ENCODE measurements at regions of chr16 and their contacts with region 1.

Region 1: DNA sequence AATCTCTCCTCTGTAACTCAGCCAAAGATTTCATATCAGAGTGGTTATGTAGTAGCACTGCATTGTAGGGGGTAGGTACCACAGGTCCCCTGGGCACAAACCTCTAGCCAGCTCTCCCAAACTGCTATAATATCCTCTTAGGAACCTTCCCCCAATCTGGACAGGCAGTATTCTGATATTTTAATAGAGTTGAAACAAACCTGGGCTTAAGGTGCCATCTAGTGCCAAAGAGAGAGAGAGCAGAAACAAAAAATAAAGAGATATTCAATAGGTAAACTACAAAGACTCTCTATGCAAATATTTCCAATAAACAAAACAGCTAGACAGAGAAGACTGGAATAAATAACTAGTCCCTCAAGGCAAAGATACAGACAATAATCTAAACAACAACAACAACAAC is 1070.0 kb downstream of the CDH11 start:
- DNase-seq: peak; percentile 32
- ATAC-seq: peak; percentile 61
- H3K4me3 ChIP-seq: no peak overlapping the region
- H3K27ac ChIP-seq: no peak overlapping the region
- H3K4me1 ChIP-seq: peaks cover 6% of the 10 kb centered on the region
- H3K27me3 ChIP-seq: no peaks in the 10 kb centered on the region
- CTCF ChIP-seq: peak; percentile 56
- EP300 ChIP-seq: no peak
- POLR2A ChIP-seq: no peak
- RAD21 ChIP-seq: 0 out of 2 replicates have a peak, but pooled peaks have one; percentile 36

Region 2: GRCh38 chr16:62190426-62190825 is 1861.4 kb before region 1 on chr16:
- CTCF ChIA-PET with region 1: no interaction called
- POLR2A ChIA-PET with region 1: no interaction called
- in situ Hi-C with region 1: no loop called
- intact Hi-C with region 1: loop called (anchors 2 kb)
- DNase-seq: peak; percentile 24
- ATAC-seq: peak; percentile 85
- H3K4me3 ChIP-seq: no peak overlapping the region
- H3K27ac ChIP-seq: no peak overlapping the region
- H3K4me1 ChIP-seq: no peaks in the 10 kb centered on the region
- H3K27me3 ChIP-seq: no peaks in the 10 kb centered on the region
- CTCF ChIP-seq: peak; percentile 41; the same call in 1 of the 2 replicates
- EP300 ChIP-seq: no peak
- POLR2A ChIP-seq: no peak
- RAD21 ChIP-seq: no peak

Region 3: DNA sequence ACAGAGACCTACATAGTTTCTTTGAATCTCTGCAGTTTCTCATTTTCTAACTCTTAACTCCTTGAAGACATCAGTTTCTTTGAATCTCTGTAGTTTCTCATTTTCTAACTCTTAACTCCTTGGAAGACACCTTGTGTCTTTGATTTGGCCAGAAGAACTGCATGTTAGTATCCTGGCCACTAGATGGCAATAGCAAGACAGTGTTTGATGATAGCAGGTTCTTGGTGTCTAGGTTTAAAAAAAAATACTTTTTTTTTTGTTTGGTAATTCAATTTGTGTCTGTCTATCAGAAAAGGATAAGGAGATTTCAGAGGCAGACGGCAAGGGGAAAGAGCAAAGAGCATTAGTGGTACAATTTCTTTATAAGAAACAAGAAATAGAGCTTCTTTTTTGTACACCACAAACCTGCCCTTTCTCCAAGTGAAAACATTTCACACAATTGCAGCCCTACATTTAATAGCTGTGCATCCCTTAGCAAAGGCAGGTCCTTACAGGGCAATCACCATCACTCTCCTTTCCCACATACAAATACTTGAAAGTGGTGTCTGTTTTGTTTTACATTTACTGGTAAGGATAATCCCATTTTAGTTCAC is 690.7 kb before region 1 on chr16:
- CTCF ChIA-PET with region 1: interaction called, 6 read pairs
- POLR2A ChIA-PET with region 1: no interaction called
- in situ Hi-C with region 1: loop called (anchors 10 kb)
- intact Hi-C with region 1: loop called (anchors 1 kb)
- DNase-seq: peak; percentile 46
- ATAC-seq: peak; percentile 62
- H3K4me3 ChIP-seq: no peak overlapping the region
- H3K27ac ChIP-seq: no peak overlapping the region
- H3K4me1 ChIP-seq: no peaks in the 10 kb centered on the region
- H3K27me3 ChIP-seq: no peaks in the 10 kb centered on the region
- CTCF ChIP-seq: peak; percentile 76
- EP300 ChIP-seq: no peak
- POLR2A ChIP-seq: no peak
- RAD21 ChIP-seq: 0 out of 2 replicates have a peak, but pooled peaks have one; percentile 15

Region 4: DNA sequence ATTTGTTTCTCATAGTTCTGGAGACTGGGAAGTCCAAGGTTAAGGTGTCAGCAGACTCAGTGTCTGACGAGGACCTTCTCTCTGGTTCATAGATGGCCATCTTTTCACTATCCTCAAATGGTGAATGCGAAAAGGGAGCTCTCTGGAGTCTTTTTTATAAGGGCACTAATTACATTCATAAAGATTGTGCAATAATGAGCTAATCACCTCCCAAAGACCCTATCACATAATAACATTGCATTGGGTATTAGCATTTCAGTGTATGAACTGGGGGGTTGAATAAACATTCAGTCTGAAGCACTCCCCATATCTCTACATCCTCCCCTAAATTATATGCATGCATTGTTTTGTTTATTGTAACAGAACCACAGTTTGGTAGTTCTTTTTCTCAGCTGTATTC is 16.5 kb before region 1 on chr16:
- CTCF ChIA-PET with region 1: no interaction called
- POLR2A ChIA-PET with region 1: no interaction called
- in situ Hi-C with region 1: no loop called
- intact Hi-C with region 1: no loop called
- DNase-seq: no peak
- ATAC-seq: no peak
- H3K4me3 ChIP-seq: no peak overlapping the region
- H3K27ac ChIP-seq: no peak overlapping the region
- H3K4me1 ChIP-seq: no peaks in the 10 kb centered on the region
- H3K27me3 ChIP-seq: no peaks in the 10 kb centered on the region
- CTCF ChIP-seq: no peak
- EP300 ChIP-seq: no peak
- POLR2A ChIP-seq: no peak
- RAD21 ChIP-seq: no peak

Measured in HepG2 (cell line).